ENCODE measurements at regions of chr11 and their contacts with region 1.

Region 1: DNA sequence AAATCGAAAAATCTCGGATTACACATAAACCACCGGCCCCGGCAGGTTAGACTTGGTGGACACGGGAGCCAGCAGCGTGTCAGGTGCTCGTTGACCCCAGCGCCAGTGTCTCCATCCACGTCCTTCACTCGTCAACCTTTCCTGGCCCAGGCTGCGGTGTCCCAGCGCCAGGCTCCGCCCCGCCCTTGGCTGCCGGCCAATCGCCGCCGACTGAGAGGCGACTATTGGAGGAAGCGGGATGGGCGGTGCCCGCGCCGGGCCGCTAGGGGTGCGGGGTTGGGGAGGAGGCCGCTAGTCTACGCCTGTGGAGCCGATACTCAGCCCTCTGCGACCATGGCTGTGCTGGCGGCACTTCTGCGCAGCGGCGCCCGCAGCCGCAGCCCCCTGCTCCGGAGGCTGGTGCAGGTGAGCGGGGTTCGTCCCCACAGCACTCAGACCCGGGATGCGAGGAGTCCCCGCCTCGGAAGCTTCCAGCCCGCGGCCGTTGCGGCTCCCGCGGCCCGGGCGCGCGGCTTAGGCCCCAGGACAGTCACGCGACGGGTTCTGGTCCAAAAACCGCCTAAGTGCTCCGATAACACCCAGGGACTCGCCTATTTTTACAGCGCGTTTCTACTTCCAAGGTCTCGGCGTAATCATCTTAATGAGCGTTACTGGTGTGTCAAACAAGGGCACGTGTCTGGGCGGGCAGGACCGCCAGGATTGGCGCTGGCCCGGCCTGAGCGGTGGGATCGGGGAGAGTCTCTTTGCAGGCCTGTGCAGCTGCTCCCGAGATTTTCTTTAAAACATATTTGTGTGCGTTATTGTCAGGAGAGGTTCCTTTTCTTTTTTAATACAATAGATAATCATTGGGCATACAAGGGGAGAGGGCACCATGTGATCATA is at the start of gene ACAT1:
- DNase-seq: peak; percentile 92 to 98 (median 94)
- H3K4me3 ChIP-seq: peak within 1 kb of the TSS; percentile 61 to 96 (median 86)
- H3K27ac ChIP-seq: peak within 1 kb of the TSS; percentile 43 to 97 (median 90)
- H3K27me3 ChIP-seq: no peaks in the 10 kb centered on the region
- CTCF ChIP-seq: peak in 48 of 56 donors; percentile 10 to 67 (median 46)
- total RNA-seq, gene ACAT1: 44.7 to 96.1 (median 72.4) TPM

Region 2: DNA sequence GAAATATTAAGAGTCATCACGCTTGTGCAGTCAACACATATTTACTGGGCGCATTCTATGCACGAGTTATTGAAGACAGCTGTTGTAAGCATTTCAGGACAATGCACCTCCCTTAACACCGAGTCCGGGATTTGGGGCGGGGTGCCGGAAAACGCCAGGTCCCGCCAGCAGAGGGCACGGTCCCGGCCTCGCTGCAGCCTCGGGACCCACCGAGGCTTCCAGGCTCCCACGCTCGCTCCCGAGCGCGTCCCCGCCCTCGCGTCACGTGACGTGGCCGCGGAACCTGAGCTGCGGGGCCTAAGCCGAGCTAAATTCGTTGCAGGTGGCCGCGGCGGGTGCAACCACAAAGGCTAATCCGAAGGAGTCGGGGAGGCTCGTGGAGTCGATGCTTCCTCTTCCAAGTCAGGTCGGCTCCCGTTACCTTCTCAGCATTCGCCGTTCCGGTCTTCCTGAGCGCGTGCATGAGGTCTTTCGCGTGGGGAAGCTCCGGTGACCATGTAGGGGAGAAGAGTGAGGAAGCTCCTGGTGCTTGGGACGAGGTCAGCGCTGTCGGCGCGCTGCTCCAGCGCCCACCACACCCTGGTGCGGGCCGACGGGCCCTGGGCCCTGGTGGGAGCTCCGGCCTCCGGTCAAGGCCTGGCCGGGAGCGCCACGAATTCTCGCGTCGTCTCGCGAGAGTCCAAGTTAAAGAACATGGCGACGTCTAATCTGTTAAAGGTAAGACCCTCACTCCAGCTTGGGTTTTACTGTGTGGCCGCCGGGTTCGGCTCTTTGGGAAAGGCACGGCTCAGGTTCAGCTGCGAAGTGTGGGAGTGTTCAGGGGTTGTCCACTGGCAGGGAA is 112.6 kb before region 1 on chr11 and contains the start of gene CUL5:
- intact Hi-C with region 1: loop called (anchors 5 kb)
- DNase-seq: peak; percentile 82 to 95 (median 86)
- H3K4me3 ChIP-seq: peak within 1 kb of the TSS; percentile 62 to 100 (median 95)
- H3K27ac ChIP-seq: peak within 1 kb of the TSS; percentile 71 to 99 (median 96)
- H3K27me3 ChIP-seq: no peaks in the 10 kb centered on the region
- CTCF ChIP-seq: peak; percentile 72 to 96 (median 87)
- total RNA-seq, gene CUL5: 36.6 to 65.6 (median 52.0) TPM

Region 3: DNA sequence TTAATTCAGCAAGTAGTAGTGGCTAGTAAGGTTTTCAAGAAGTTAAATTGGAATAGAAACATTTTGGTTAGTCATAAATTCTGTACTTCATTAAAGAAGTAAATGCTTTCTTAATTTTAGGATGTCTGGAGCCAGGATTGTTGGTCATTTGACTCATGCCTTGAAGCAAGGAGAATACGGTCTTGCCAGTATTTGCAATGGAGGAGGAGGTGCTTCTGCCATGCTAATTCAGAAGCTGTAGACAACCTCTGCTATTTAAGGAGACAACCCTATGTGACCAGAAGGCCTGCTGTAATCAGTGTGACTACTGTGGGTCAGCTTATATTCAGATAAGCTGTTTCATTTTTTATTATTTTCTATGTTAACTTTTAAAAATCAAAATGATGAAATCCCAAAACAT is 25.6 kb after region 1 on chr11:
- intact Hi-C with region 1: no loop called
- DNase-seq: no peak
- H3K4me3 ChIP-seq: no peak overlapping the region
- H3K27ac ChIP-seq: peak overlapping the region in 2 of 59 donors; percentile 39 to 60
- H3K27me3 ChIP-seq: no peaks in the 10 kb centered on the region
- CTCF ChIP-seq: no peak